ENCODE measurements at regions of chr12 and their contacts with region 1.

Region 1: DNA sequence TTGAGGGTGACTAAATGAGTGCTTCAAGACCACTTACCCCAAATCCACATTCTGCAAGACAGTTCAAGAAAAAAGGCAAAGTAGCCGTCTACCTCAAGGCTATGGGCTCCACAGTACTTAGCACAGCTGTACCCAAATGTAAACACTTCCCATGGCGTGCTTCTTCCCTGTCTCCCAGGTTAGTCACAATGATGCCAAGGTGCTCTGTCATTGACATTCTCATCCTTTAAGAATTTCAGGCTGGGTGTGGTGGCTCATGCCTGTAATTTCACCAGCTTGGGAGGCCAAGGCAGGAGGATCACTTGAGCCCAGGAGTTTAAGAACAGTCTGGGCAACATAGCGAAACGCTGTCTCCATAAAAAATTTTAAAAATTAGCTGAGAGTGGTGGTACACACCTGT is 51.2 kb upstream of the CERS5 start:
- DNase-seq: no peak
- ATAC-seq: no peak
- H3K4me3 ChIP-seq: no peak overlapping the region
- H3K27ac ChIP-seq: no peak overlapping the region
- H3K4me1 ChIP-seq: peaks cover 26% of the 10 kb centered on the region
- H3K27me3 ChIP-seq: no peaks in the 10 kb centered on the region
- CTCF ChIP-seq: no peak

Region 2: DNA sequence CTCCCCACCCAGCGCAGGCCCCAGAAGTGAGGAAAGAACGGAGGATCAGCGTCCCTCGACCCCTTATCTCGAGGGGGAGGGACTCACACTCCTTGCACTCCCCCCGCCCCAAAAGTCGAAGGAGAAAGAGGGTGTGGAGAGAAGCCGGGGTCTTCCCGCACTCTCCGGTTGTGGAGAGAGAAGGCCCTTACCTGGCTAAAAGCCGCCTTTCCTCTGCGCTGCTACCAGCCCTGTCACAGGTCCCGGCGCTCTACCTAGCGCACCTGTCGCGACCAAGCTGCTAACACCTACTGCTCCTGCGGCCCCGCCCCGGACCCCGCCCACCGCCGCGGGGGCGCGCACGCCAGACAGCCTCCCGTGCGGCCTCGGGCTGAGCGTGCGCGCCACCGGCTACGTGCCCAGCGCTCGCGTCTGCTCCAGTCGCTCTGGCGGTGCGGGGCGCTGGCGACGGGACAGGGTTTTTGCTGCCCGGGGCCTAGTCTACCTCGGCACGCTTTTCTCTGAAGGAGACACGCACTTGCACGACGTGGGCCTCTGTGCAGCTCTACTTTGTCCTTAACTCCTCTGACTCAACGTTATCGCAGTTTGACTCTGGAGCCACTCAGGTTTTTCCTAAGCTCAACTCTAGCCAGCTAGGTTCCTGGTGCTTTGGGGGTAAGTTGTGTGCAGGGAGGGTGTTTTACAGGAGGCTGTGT is 65.0 kb after region 1 on chr12 and contains the start of gene LIMA1:
- intact Hi-C with region 1: loop called in 1 of 2 experiments (anchors 5 kb)
- DNase-seq: peak; percentile 95 to 97
- ATAC-seq: peak; percentile 99
- H3K4me3 ChIP-seq: peak within 1 kb of the TSS; percentile 93
- H3K27ac ChIP-seq: peak within 1 kb of the TSS; percentile 96
- H3K4me1 ChIP-seq: peaks cover 13% of the 10 kb centered on the region
- H3K27me3 ChIP-seq: no peaks in the 10 kb centered on the region
- CTCF ChIP-seq: no peak
- total RNA-seq, gene LIMA1: 8.3 to 25.3 (median 17.5) TPM

Region 3: DNA sequence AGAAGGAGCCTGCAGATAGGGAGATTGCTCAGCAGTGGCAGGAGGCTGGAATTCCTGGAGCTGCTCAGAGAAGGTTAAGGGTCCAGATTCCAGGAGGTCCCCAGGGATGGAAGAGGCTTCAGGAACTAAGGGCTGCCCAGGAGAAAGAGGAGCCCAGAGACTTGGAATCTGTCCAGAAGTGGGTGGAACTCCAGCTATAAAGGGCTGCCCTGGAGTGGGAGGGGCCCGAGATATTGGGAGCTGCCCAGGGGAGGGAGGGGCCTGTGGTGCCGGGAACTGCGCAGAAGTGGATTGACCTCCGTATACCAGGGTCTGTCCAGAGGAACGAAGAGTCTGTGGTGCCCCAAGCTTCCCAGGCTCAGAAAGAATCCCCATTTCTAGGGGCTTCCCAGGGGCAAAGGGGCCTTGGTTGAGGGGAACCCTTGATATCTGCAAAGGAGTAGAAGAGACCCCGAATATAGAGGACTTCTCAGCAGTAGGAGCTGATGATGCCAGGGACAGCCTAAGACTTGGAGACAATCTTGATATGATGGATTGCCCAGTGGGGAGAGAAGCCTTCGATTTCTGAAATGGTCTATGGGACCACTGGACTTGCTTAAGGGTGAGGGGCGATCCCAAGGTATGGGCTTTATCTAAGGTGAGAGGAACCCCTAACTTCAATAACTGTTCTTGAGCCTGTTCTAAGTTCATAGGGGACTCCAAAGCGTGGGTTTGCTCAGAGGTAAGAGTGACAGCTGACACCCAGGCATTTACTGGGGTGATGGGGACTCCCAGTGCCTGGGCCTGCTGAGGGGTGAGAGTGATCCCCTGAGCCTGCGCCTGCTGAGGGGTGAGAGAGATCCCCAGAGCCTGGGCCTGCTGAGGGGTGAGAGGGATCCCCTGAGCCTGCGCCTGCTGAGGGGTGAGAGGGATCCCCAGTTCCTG is 133.0 kb after region 1 on chr12:
- intact Hi-C with region 1: no loop called
- DNase-seq: peak; percentile 27 to 57
- ATAC-seq: no peak
- H3K4me3 ChIP-seq: no peak overlapping the region
- H3K27ac ChIP-seq: no peak overlapping the region
- H3K4me1 ChIP-seq: no peaks in the 10 kb centered on the region
- H3K27me3 ChIP-seq: no peaks in the 10 kb centered on the region
- CTCF ChIP-seq: no peak

Measured in psoas muscle (tissue), 8 donors.